ENCODE measurements at regions of chr11 and their contacts with region 1.

Region 1: GRCh38 chr11:19742588-19743292 is 30.1 kb downstream of the NAV2 start:
- DNase-seq: peak; percentile 67
- H3K4me3 ChIP-seq: no peak overlapping the region
- H3K27ac ChIP-seq: no peak overlapping the region
- H3K4me1 ChIP-seq: peaks cover 7% of the 10 kb centered on the region
- H3K27me3 ChIP-seq: no peaks in the 10 kb centered on the region
- CTCF ChIP-seq: peak; percentile 86 to 89

Region 2: DNA sequence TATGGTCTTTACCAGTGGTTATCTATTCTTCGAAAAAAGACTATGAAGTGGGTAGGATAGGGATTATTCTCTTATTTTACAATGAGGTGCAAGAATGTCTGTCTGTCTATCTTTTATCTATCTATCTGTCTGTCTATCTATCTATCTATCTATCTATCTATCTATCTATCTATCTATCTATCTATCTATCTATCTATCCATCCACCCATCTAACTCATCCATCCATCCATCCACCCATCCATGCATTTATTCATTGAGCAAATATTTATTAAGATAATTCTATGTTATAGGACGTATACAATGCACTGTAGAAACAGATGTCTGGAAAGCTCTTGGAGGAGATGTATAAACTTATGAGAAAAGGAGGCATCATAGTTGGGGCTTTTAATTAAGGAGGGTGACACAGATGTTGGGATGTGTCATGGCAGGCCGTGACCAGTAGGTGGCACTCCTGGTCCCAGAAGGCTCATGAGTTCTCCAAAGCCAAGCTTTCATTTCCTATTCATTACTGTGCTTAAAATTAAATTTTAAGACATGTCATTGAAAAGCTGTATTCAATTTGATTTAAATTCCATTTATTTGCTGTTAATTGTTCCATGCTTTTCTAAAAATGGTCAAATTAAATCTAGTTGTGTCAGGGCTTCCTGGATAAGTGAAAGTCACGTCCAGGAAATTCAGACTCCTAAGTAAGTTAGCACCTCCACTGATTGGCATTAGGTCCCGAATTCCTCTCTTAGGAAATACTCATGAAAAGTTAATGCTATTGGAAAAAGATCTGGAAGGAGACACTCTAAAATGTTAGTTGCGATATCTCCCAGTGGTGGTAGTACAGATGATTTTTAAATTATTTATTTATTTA is 483.0 kb before region 1 on chr11:
- CTCF ChIA-PET with region 1: no interaction called
- dilution Hi-C with region 1: no loop called
- in situ Hi-C with region 1: no loop called
- intact Hi-C with region 1: loop called (anchors 10 kb)
- DNase-seq: peak; percentile 36
- H3K4me3 ChIP-seq: no peak overlapping the region
- H3K27ac ChIP-seq: no peak overlapping the region
- H3K4me1 ChIP-seq: no peaks in the 10 kb centered on the region
- H3K27me3 ChIP-seq: no peaks in the 10 kb centered on the region
- CTCF ChIP-seq: peak; percentile 94 to 99

Region 3: GRCh38 chr11:19553683-19554333 is 188.9 kb before region 1 on chr11:
- CTCF ChIA-PET with region 1: no interaction called
- dilution Hi-C with region 1: loop called (anchors 25 kb)
- in situ Hi-C with region 1: no loop called
- intact Hi-C with region 1: no loop called
- DNase-seq: peak; percentile 47
- H3K4me3 ChIP-seq: no peak overlapping the region
- H3K27ac ChIP-seq: no peak overlapping the region
- H3K4me1 ChIP-seq: no peaks in the 10 kb centered on the region
- H3K27me3 ChIP-seq: no peaks in the 10 kb centered on the region
- CTCF ChIP-seq: peak; percentile 79 to 89

Region 4: DNA sequence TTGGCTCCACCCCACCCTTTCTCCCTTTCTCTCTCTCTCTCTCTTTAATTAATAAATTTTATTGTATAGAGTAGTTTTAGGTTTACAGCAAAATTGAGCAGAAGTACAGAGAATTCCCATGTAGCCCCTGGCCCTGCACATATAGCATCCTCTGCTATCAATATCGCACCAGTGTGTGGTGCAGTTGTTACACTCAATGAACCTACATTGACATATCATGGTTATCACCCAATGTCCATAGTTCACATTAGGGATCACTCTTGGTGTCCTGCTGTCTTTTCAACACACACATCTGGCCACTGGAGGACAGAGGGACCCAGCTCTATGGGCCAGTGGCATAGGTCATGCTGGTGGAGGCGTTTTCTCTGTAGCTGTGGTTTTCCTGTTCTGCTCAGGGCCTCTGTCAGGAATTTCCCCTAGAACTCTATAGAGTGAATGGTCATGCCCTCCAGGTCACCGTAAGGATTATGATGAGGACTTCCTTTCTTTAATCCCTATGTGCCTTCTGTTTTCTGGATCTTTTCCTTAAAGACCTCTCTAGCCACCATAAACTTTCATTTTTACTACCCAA is 128.3 kb before region 1 on chr11:
- CTCF ChIA-PET with region 1: no interaction called
- dilution Hi-C with region 1: no loop called
- in situ Hi-C with region 1: no loop called
- intact Hi-C with region 1: loop called (anchors 1 kb)
- DNase-seq: no peak
- H3K4me3 ChIP-seq: no peak overlapping the region
- H3K27ac ChIP-seq: no peak overlapping the region
- H3K4me1 ChIP-seq: no peaks in the 10 kb centered on the region
- H3K27me3 ChIP-seq: no peaks in the 10 kb centered on the region
- CTCF ChIP-seq: no peak